GM12878 (cell line): ENCODE measurements at regions of chr11 and their contacts with region 1.

Region 1: DNA sequence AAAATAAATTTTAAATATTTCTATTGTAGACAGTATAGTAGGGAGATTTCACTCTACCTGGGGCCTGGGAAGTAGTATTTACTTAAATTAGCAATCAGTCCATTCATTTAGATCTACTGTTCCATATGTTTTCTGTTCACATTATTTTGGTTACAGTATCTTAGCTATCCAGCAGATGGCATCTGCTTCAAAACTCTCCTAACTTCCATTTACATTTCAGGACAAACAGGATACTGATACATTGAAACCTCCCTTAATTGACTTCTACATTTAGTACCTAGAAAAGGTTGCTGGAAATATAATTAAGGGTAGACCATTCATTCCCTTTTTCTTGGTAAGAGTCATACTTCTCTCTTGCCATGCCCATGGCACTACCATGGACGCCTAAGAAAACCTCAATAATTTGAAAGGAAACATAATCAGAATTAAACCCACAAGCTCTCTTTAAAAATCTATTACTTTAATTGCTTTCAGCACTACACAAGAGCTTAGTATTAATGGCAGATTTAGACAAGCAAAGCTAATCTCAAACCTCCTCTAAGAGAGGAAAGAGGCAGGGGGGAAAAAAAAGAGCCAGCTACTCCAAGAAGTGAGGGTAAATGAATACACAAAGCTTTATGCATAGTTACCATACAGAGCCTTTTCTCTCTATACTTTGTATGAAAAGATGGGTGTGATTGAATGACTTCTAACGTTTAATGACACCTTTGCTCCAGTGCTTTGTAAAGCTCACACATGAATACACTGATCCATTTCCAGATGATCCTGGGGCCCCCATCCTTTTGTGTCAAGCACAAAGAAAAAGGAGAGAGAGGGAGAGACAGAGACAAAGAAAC is 131.2 kb upstream of the MTMR2 start:
- DNase-seq: no peak
- ATAC-seq: no peak
- H3K4me3 ChIP-seq: no peak overlapping the region
- H3K27ac ChIP-seq: no peak overlapping the region
- H3K4me1 ChIP-seq: peaks cover 27% of the 10 kb centered on the region
- H3K27me3 ChIP-seq: no peaks in the 10 kb centered on the region
- CTCF ChIP-seq: peak; percentile 46 to 58 (median 48)
- EP300 ChIP-seq: no peak
- POLR2A ChIP-seq: no peak
- RAD21 ChIP-seq: peak; percentile 63

Region 2: DNA sequence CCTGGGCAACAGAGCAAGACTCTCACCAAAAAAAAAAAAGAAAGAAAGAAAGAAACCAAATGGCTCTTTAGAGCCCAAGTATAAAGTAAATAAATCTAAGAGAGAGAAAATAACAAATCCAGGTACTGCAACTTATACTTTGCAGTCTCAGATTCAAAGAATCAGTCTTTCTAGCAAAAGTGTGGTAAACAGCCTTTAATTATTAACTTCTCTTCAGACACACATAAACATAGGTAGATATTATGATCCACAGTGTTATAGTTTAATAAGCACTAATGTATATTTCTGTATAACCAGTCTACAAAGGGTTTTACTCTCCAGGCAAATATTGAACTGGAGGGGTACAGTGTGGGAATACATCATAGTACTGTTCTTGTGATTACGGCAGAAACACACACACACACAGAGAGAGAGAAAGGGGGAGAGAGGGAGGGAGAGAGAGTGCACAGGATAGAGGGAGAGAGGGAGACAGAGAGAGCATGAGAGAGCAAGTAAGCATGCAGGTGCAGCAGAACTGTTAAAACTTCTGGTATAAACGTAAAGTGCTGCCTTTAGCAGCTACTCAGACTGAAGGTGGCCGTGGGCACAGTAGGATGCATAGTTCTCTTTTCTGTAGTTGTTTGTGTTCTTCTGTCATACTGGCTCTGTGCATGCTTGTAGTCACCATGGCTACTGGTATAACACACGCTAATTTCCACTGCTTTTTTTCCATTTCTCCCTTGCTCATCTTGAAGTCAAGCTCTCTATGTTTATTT is 163.5 kb before region 1 on chr11:
- CTCF ChIA-PET with region 1: no interaction called
- POLR2A ChIA-PET with region 1: no interaction called
- RAD21 ChIA-PET with region 1: no interaction called
- SMC1A ChIA-PET with region 1: no interaction called
- in situ Hi-C with region 1: no loop called
- intact Hi-C with region 1: no loop called
- DNase-seq: no peak
- ATAC-seq: peak; percentile 86
- H3K4me3 ChIP-seq: no peak overlapping the region
- H3K27ac ChIP-seq: no peak overlapping the region
- H3K4me1 ChIP-seq: no peaks in the 10 kb centered on the region
- H3K27me3 ChIP-seq: no peaks in the 10 kb centered on the region
- CTCF ChIP-seq: no peak
- EP300 ChIP-seq: no peak
- POLR2A ChIP-seq: no peak
- RAD21 ChIP-seq: no peak

Region 3: GRCh38 chr11:96070461-96070860 is 15.4 kb after region 1 on chr11:
- CTCF ChIA-PET with region 1: interaction called, 26 read pairs
- POLR2A ChIA-PET with region 1: interaction called, 6 read pairs
- RAD21 ChIA-PET with region 1: interaction called, 22 read pairs
- SMC1A ChIA-PET with region 1: interaction called, 15 read pairs
- in situ Hi-C with region 1: no loop called
- intact Hi-C with region 1: no loop called
- DNase-seq: no peak
- ATAC-seq: no peak
- H3K4me3 ChIP-seq: no peak overlapping the region
- H3K27ac ChIP-seq: no peak overlapping the region
- H3K4me1 ChIP-seq: peaks cover 12% of the 10 kb centered on the region
- H3K27me3 ChIP-seq: no peaks in the 10 kb centered on the region
- CTCF ChIP-seq: no peak
- EP300 ChIP-seq: no peak
- POLR2A ChIP-seq: no peak
- RAD21 ChIP-seq: no peak

Region 4: DNA sequence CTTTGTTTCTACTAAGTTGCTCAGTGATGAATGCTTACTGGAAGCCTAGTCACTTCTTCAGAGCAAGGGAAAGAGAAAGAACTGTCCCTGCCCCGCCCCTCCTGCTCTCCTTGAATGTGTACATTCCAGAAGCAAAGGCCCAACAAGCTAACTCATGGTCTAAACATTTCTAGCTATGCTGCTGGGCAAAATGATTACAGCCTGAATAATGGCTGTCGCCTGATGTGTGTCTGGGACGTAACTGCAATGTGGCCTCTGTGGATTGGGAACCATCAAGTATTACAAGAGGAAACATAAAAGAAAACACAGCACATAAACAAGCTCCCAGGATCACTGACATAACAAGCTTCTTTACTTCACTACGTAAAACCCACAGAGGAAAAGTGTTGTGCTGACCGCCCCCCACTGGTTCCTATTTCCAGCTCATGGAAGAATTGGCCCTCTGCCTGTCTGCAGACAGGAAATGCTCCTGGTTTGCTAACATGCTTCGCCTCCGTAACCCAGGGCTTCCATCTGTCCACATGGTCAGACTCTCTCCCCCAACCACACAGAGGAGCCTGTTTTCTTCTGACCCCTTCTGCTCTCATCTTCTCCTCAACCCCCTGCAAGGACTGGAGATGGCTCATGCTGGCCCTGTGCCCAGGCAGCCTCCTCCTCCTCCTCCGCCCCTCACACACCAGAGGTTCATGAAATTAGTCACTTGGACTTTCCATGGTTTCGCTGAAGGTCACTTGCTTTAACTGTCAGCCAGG is 100.7 kb after region 1 on chr11:
- CTCF ChIA-PET with region 1: interaction called, 9 read pairs
- POLR2A ChIA-PET with region 1: no interaction called
- RAD21 ChIA-PET with region 1: interaction called, 9 read pairs
- SMC1A ChIA-PET with region 1: interaction called, 12 read pairs
- in situ Hi-C with region 1: no loop called
- intact Hi-C with region 1: no loop called
- DNase-seq: peak; percentile 76
- ATAC-seq: peak; percentile 89
- H3K4me3 ChIP-seq: 0 out of 2 replicates have a peak overlapping the region, but pooled peaks have one; percentile 2
- H3K27ac ChIP-seq: peak overlapping the region; percentile 87
- H3K4me1 ChIP-seq: peaks cover 37% of the 10 kb centered on the region
- H3K27me3 ChIP-seq: no peaks in the 10 kb centered on the region
- CTCF ChIP-seq: peak in 2 of 3 experiments; percentile 17 to 19; a peak in 3 of 6 replicates
- EP300 ChIP-seq: peak in 1 of 2 experiments; percentile 82; a peak in 3 of 4 replicates
- POLR2A ChIP-seq: no peak
- RAD21 ChIP-seq: peak; percentile 18